Right ventricle myocardium superior (tissue), 1 donor: ENCODE measurements at regions of chr5 and their contacts with region 1.

Region 1: DNA sequence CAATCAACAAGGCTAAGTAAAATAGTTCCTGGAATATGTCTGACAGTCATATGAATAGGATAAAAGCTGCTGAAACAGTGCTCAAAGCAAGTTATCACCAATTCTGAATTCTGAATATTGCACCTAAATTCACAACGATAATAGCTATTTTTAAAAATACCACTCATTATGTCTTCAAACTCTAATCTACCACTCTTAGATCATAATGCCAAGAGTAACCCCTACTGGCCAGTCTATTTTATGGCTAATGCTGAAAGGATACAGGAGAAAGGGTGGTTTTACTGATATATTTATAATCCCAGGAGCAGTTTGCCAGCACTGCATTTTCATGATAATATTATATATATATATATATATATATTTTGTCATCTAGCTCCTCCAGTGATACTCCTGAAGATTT is 232.8 kb downstream of the PDE4D start:
- DNase-seq: no peak
- ATAC-seq: no peak

Region 2: GRCh38 chr5:59193616-59194319 is 467.0 kb before region 1 on chr5:
- intact Hi-C with region 1: loop called (anchors 5 kb)
- DNase-seq: no peak
- ATAC-seq: peak; percentile 47

Region 3: DNA sequence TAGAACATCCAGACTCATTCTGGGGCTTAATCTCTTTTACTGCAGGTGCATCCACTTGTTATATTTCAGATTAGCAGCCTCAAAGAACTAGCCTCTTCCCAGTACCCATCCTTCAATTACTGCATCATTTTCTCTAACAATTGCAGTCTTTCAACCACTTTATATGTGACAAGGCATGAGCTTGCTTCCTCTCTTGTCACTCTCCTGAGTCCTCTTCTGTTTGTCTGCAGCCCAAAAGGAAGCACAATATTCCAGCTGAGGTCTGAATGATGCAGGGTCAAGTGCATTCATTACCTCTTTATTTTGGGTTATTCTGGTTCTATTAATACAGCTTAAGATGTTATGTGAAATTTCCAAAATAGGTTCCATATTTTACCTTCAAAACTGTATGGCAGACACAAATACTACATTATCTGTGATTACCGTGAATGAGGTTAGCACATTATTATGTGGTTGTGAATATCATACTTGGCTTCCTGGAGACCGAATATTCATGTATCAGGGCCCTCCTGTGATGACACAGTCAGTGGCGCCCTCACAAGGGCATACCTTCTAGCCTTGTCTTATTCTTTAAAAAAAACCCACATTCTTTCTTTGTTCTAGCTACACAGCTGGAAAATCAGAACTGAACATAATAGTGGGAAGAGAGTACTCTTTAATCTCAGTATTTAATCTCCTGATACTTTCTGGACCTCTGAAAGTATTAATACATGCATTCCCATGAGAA is 91.0 kb before region 1 on chr5:
- intact Hi-C with region 1: no loop called
- DNase-seq: no peak
- ATAC-seq: no peak

Region 4: DNA sequence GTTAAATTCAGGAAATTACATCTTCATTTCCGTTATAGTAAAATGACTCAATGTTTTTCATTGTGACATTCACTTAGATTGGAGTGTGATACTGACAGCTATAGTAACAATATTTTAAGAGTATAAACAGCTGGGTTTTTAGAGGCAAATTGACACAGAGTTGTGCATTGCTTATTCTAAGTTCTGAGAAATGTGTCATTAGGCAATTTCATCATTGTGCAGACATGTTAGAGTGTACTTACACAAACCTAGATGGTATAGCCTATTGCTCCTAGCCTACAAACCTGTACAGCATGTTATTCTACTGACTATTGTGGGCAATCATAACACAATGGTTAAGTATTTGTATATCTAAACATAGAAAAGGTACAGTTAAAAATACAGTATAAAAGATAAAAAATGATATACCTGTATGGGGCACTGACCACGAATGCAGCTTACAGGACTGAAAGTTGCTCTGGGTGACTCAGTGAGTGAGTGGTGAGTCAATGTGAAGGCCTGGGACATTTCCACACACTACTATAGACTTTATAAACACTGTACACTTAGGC is 100.1 kb after region 1 on chr5:
- intact Hi-C with region 1: no loop called
- DNase-seq: no peak
- ATAC-seq: no peak